Activated naive CD4-positive, alpha-beta T cell treated with anti-CD3 and anti-CD28 coated beads for 36 hours (primary cell): ENCODE measurements at regions of chr2 and their contacts with region 1.

Region 1: GRCh38 chr2:8514796-8515758 is 166.8 kb upstream of the ID2 start:
- DNase-seq: peak; percentile 84
- H3K4me3 Mint-ChIP-seq: peak overlapping the region; percentile 42
- H3K27ac Mint-ChIP-seq: peak overlapping the region; percentile 96
- H3K4me1 Mint-ChIP-seq: peaks cover 46% of the 10 kb centered on the region
- H3K27me3 Mint-ChIP-seq: no peaks in the 10 kb centered on the region

Region 2: GRCh38 chr2:6917071-6917760 is 1597.9 kb before region 1 on chr2 and contains the start of gene RNF144A:
- CTCF ChIA-PET with region 1: no interaction called
- intact Hi-C with region 1: loop called (anchors 1 kb)
- DNase-seq: peak; percentile 67
- H3K4me3 Mint-ChIP-seq: peak within 1 kb of the TSS; percentile 76
- H3K27ac Mint-ChIP-seq: peak within 1 kb of the TSS; percentile 85
- H3K4me1 Mint-ChIP-seq: peaks cover 75% of the 10 kb centered on the region
- H3K27me3 Mint-ChIP-seq: no peaks in the 10 kb centered on the region
- total RNA-seq, gene RNF144A: 49.0 to 50.6 TPM

Region 3: DNA sequence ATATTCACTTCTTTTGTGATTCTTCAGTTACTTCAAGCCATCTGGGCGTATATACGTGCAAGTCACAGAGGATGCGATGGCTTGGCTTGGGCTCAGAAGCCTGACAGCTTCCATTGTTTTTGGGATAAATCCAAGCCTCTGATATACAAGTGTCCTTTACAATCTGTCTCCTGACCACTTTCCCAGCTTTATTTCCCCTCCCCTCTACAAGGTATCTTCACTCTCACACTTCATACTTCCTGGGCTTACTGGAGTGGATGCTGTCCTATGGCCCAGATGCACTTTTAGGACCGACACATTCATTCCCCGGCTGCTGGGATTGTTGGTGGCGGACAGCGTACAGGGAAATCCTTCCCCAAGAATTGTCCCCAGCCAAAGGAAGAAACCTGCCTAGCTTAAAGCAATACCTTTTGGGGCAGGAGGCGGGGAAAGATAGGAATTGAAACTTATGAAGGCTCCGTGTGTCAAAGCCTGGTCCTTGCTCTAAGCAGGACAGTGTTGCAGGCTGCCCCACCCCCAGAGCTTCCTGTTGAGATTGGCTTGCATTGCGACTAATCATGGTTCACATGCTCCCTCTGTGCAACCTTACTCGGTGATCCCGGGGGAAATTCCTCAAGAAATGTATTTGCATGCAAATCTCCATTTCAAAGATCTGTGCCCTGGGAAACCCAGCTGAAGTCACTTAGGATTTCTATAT is 636.1 kb before region 1 on chr2:
- CTCF ChIA-PET with region 1: no interaction called
- intact Hi-C with region 1: no loop called
- DNase-seq: no peak
- H3K4me3 Mint-ChIP-seq: no peak overlapping the region
- H3K27ac Mint-ChIP-seq: no peak overlapping the region
- H3K4me1 Mint-ChIP-seq: no peaks in the 10 kb centered on the region
- H3K27me3 Mint-ChIP-seq: no peaks in the 10 kb centered on the region

Region 4: DNA sequence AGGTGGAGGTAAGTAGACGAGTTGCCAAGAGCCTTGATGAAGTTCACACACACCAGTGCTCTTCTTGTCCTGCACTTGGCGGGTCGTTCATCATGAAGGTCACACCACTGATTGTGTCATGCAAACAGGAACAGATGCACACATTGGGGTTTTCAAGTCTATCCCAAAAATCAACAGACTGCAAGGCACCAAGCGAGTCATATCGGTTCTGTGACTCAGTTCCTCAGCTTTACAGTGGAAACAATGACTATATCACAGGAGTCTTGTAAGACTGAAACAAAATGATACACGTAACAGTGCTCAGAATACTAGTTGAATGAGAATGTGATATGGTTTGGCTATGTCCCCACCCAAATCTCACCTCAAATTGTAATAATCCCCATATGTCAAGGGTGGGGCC is 360.1 kb before region 1 on chr2:
- CTCF ChIA-PET with region 1: no interaction called
- intact Hi-C with region 1: loop called (anchors 1 kb)
- DNase-seq: peak; percentile 68
- H3K4me3 Mint-ChIP-seq: no peak overlapping the region
- H3K27ac Mint-ChIP-seq: peak overlapping the region; percentile 78
- H3K4me1 Mint-ChIP-seq: peaks cover 16% of the 10 kb centered on the region
- H3K27me3 Mint-ChIP-seq: no peaks in the 10 kb centered on the region

Region 5: GRCh38 chr2:8303322-8303832 is 211.7 kb before region 1 on chr2:
- CTCF ChIA-PET with region 1: no interaction called
- intact Hi-C with region 1: loop called (anchors 2 kb)
- DNase-seq: peak; percentile 69
- H3K4me3 Mint-ChIP-seq: no peak overlapping the region
- H3K27ac Mint-ChIP-seq: no peak overlapping the region
- H3K4me1 Mint-ChIP-seq: peaks cover 39% of the 10 kb centered on the region
- H3K27me3 Mint-ChIP-seq: peaks cover 5% of the 10 kb centered on the region

Region 6: GRCh38 chr2:8477552-8478470 is 37.3 kb before region 1 on chr2:
- CTCF ChIA-PET with region 1: interaction called, 3 read pairs
- intact Hi-C with region 1: loop called (anchors 1 kb)
- DNase-seq: peak; percentile 54
- H3K4me3 Mint-ChIP-seq: no peak overlapping the region
- H3K27ac Mint-ChIP-seq: peak overlapping the region; percentile 31
- H3K4me1 Mint-ChIP-seq: peaks cover 65% of the 10 kb centered on the region
- H3K27me3 Mint-ChIP-seq: no peaks in the 10 kb centered on the region

Region 7: DNA sequence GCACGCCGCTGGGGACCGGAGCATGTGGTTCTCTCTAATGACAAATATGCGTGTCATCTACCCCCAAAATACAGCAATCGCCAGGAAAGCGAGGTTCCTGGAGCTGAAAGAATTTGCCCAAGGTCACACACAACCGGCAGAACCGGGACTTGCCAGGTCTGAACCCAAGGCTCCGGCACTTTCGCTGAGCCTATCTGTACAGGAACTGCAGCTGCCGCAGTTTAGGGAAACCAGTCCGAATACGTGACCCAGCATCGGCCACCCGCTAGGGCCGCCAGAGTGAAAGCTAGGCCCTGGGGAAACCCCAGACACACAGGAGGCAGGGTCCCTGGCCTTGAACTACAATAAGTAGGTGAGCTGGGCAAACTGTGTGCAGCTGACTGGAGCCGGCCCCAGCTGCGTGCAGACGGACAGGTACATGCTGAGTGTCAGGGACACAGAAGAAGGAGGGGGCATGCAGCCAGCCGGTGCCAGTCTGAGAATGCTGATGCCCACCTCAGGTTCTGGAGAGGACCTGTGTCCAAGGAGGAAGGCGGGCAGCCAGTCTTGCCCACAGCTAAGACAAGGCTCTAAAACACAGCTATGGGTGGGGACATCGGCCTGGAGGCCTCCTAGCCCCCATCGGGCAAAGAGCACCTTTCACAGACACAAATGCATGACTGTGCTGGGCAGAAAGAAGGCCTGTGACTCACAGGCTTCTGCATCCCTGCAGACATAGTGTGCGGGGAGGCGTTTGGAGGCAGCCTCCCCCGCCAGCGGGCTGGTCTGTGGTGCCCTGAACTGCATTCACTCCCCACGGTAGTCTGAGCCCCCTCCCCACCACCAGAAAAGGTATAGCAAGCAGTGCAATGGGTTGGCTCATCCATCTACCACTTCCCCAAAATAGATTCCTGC is 59.3 kb after region 1 on chr2:
- CTCF ChIA-PET with region 1: no interaction called
- intact Hi-C with region 1: loop called (anchors 2 kb)
- DNase-seq: no peak
- H3K4me3 Mint-ChIP-seq: no peak overlapping the region
- H3K27ac Mint-ChIP-seq: peak overlapping the region; percentile 28
- H3K4me1 Mint-ChIP-seq: peaks cover 35% of the 10 kb centered on the region
- H3K27me3 Mint-ChIP-seq: peaks cover 5% of the 10 kb centered on the region

Region 8: DNA sequence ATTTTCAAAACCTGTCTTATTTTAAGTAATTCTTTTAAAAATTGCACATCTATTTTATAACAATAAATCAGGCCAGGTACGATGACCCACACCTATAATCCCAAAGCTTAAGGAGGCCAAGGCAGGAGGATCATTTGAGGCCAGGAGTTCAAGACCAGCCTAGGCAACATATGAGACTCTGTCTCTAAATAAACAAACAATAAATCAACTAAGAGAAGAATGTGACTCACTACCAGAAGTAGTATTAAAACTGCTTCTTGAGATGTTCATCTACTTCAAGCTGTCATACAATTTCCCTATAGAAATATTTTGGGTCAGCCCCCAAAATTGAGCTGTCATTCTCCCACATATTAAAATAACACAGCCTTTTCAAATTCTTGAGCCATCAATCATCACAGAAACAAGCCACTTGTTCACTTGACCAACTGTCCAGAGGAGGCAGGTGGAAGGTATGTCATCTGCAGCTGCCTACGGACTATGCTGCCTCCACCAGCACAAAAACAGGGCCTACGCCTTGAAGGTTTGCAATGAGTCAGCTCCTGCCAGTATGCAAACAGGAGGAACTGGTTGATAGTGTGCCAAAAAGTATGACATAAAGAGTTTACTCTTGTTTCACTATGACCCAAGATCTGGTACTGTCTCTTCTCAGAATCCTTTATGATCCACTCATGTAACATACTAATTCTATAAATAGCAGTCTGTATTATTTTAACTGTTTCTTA is 288.7 kb after region 1 on chr2:
- CTCF ChIA-PET with region 1: no interaction called
- intact Hi-C with region 1: loop called (anchors 1 kb)
- DNase-seq: peak; percentile 78
- H3K4me3 Mint-ChIP-seq: no peak overlapping the region
- H3K27ac Mint-ChIP-seq: peak overlapping the region; percentile 75
- H3K4me1 Mint-ChIP-seq: peaks cover 19% of the 10 kb centered on the region
- H3K27me3 Mint-ChIP-seq: no peaks in the 10 kb centered on the region